ENCODE measurements at regions of chr7 and their contacts with region 1.

Region 1: DNA sequence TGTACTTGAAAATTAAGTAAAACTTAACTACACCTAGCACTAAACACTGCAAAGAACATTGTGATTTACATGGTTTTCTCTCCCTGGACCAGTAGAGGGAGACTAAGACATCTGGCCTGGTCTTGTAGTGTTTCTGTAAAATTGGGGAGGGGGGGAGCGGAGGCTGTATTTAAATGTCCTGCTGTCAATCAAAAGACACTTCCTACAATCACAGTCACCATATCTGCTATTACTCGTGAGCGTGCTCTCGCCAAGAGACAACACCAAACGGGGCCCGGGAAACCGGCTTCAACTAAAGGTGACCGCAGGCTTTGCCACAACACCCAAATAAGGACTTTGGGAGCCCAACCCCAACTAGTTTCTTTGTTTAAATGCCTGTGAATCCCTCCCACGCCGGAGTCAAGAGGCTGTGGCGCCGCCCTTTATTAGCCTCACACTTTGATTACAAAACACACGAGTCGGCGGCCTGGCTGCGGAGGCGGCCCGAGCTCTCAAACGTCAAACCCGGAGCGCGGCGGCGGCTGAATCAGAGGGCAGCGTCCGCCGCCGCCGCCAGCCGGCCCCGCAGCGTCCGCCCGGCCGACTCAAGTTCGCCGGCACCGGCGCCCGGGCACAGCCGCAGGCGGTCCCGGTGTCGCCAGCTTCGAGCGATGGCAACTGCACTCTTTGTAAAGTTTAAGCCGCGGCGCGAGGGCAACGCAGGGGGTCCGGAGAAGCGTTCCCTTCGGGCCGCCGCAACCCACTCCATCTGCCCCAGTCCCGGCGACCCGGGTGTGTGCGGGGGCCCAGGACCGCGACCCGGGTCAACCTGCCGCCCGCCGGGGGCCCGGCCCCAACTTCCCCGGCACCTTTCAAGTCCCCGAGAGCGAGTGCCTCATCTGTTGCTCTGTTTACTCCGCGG is 1.3 kb downstream of the KDM7A start:
- DNase-seq: peak; percentile 95
- H3K4me3 Mint-ChIP-seq: peak overlapping the region; percentile 80
- H3K27ac Mint-ChIP-seq: peak overlapping the region; percentile 91
- H3K4me1 Mint-ChIP-seq: peaks cover 52% of the 10 kb centered on the region
- H3K27me3 Mint-ChIP-seq: no peaks in the 10 kb centered on the region

Region 2: GRCh38 chr7:139777948-139778841 is 397.3 kb before region 1 on chr7 and contains the start of gene HIPK2:
- CTCF ChIA-PET with region 1: no interaction called
- POLR2A ChIA-PET with region 1: no interaction called
- intact Hi-C with region 1: loop called (anchors 10 kb)
- DNase-seq: peak; percentile 74
- H3K4me3 Mint-ChIP-seq: peak within 1 kb of the TSS; percentile 95
- H3K27ac Mint-ChIP-seq: peak within 1 kb of the TSS; percentile 90
- H3K4me1 Mint-ChIP-seq: peaks cover 36% of the 10 kb centered on the region
- H3K27me3 Mint-ChIP-seq: peaks cover 15% of the 10 kb centered on the region
- total RNA-seq, gene HIPK2: 18.9 to 19.1 TPM

Region 3: DNA sequence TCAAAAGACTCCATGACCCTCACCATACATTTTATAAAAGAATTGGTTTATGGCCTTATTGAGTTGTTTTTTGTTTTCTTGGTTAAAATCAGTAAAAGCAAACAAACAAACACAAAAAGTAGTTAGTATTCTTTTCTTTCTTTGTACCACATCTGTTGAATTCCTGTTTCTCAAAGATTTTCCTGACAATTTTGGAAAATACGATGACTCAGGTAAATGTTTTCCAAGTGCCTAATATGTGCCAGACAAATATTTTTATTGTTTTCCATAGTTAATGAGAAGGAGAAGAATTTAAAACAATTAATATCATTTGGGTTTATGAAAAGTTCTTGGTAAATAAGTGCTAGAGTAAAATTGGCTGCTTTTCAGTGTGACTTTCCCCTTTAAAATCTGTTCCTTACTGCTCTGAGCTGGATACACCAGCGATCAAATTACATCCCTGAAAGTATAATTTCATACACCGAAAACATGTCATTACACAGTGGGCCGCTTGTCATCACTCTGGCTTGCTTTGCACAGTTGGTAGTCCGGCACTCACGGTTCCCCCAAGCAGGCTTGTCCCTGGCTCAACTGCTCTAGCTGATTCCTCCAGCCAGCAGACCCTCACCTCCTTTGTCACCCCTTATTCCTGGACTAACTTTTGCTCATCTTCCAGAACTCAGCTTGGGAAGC is 266.0 kb before region 1 on chr7:
- CTCF ChIA-PET with region 1: no interaction called
- POLR2A ChIA-PET with region 1: no interaction called
- intact Hi-C with region 1: no loop called
- DNase-seq: no peak
- H3K4me3 Mint-ChIP-seq: no peak overlapping the region
- H3K27ac Mint-ChIP-seq: no peak overlapping the region
- H3K4me1 Mint-ChIP-seq: peaks cover 10% of the 10 kb centered on the region
- H3K27me3 Mint-ChIP-seq: peaks cover under 1% of the 10 kb centered on the region

Region 4: GRCh38 chr7:140084972-140085371 is 90.5 kb before region 1 on chr7:
- CTCF ChIA-PET with region 1: no interaction called
- POLR2A ChIA-PET with region 1: no interaction called
- intact Hi-C with region 1: loop called (anchors 5 kb)
- DNase-seq: peak; percentile 71
- H3K4me3 Mint-ChIP-seq: no peak overlapping the region
- H3K27ac Mint-ChIP-seq: peak overlapping the region; percentile 26
- H3K4me1 Mint-ChIP-seq: peaks cover 23% of the 10 kb centered on the region
- H3K27me3 Mint-ChIP-seq: no peaks in the 10 kb centered on the region

Region 5: DNA sequence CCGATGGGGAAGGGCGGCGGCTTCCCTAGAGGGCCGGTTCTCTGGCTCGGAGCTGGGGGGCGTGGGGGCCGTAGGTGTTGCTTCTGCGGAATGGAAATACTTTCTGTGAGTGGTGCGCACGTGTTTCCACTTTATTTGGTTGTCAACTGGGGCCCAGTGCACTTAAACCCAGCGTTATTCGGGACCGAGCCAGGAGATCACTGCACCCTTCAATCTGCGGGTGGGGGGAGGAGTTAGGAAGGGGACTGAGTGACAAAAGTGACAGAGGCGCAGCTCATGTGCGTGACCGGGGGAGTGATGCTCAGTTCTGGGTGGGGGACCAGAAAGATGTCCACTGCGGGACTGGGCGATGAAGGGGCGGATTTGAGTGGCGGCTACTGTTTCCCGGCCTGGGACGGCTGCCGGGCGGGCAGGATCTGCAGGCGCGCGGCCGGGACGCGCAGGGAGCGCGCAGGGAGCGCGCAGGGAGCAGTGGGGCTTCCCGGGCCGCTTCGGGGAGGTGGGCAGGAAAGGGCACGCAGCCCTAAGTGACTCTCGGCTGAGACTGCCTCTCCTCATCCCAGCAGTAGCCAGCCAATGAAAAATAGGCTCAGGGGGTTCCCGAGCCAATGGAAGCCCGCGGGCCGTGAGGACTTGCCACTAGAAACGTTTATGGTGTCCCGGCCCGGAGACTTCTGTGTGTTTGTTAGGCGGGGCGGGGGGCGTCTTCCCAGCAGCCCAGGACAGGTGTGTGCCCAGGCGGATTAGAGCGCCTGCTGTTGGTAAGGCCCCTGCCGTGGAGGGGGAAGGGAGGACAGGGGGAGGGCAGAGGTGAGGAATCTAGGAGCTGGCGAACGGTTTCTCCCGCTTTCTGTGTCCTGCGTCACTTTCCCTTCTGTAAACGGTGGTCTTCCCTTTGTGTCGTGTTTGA is 55.6 kb after region 1 on chr7:
- CTCF ChIA-PET with region 1: interaction called, 7 read pairs
- POLR2A ChIA-PET with region 1: interaction called, 86 read pairs
- intact Hi-C with region 1: loop called (anchors 1 kb)
- DNase-seq: peak; percentile 78
- H3K4me3 Mint-ChIP-seq: peak overlapping the region; percentile 79
- H3K27ac Mint-ChIP-seq: peak overlapping the region; percentile 99
- H3K4me1 Mint-ChIP-seq: peaks cover 32% of the 10 kb centered on the region
- H3K27me3 Mint-ChIP-seq: no peaks in the 10 kb centered on the region

Region 6: GRCh38 chr7:140326116-140326928 is 150.9 kb after region 1 on chr7:
- CTCF ChIA-PET with region 1: interaction called, 8 read pairs
- POLR2A ChIA-PET with region 1: interaction called, 3 read pairs
- intact Hi-C with region 1: loop called (anchors 1 kb)
- DNase-seq: peak; percentile 63
- H3K4me3 Mint-ChIP-seq: no peak overlapping the region
- H3K27ac Mint-ChIP-seq: no peak overlapping the region
- H3K4me1 Mint-ChIP-seq: no peaks in the 10 kb centered on the region
- H3K27me3 Mint-ChIP-seq: no peaks in the 10 kb centered on the region

Region 7: GRCh38 chr7:140479062-140479738 is 303.7 kb after region 1 on chr7 and contains the start of gene MKRN1:
- CTCF ChIA-PET with region 1: no interaction called
- POLR2A ChIA-PET with region 1: interaction called, 3 read pairs
- intact Hi-C with region 1: loop called (anchors 1 kb)
- DNase-seq: peak; percentile 96
- H3K4me3 Mint-ChIP-seq: peak within 1 kb of the TSS; percentile 97
- H3K27ac Mint-ChIP-seq: peak within 1 kb of the TSS; percentile 96
- H3K4me1 Mint-ChIP-seq: peaks cover 27% of the 10 kb centered on the region
- H3K27me3 Mint-ChIP-seq: no peaks in the 10 kb centered on the region
- total RNA-seq, gene MKRN1: 104 to 106 TPM

Region 8: DNA sequence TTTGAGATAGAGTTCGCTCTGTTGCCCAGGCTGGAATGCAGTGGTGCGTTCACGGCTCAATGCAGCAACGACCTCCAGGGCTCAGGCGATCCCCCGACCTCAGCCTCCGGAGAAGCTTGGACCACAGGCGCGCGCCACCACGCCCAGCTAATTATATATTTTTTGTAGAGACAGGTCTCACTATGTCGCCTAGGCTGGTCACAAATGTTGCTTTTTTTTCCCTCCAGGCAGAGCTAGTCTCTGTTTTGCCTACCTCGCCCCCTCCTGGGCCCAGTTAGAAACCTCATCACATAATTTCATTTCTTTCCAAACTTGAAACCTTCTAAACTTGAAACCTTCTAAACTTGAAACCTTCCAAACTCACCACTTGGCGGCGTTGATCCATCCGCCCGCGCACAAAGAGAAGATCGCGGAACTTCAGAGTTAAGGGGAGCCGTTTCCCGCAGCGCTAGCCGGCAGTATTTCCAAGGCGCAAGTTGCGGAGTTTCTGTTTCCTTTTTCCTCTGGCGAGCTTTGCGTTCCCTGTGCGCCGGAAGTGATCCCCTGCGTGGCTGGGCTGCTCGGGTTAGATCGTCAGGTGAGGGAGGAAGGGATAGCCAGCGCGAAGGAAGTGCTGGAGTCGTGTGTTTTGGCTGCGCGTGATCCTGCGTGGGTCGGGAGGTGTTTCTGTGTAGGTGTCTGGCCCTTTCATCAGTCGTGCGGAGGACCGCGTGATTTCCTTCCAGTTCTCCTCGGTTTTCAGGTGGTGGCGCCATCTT is 1562.5 kb after region 1 on chr7 and contains the start of gene SSBP1:
- CTCF ChIA-PET with region 1: no interaction called
- POLR2A ChIA-PET with region 1: no interaction called
- intact Hi-C with region 1: loop called (anchors 10 kb)
- DNase-seq: peak; percentile 96
- H3K4me3 Mint-ChIP-seq: peak within 1 kb of the TSS; percentile 99
- H3K27ac Mint-ChIP-seq: peak within 1 kb of the TSS; percentile 99
- H3K4me1 Mint-ChIP-seq: peaks cover 35% of the 10 kb centered on the region
- H3K27me3 Mint-ChIP-seq: no peaks in the 10 kb centered on the region
- total RNA-seq, gene SSBP1: 207 to 234 TPM